HCT116 (cell line): ENCODE measurements at regions of chr1 and their contacts with region 1.

Region 1: DNA sequence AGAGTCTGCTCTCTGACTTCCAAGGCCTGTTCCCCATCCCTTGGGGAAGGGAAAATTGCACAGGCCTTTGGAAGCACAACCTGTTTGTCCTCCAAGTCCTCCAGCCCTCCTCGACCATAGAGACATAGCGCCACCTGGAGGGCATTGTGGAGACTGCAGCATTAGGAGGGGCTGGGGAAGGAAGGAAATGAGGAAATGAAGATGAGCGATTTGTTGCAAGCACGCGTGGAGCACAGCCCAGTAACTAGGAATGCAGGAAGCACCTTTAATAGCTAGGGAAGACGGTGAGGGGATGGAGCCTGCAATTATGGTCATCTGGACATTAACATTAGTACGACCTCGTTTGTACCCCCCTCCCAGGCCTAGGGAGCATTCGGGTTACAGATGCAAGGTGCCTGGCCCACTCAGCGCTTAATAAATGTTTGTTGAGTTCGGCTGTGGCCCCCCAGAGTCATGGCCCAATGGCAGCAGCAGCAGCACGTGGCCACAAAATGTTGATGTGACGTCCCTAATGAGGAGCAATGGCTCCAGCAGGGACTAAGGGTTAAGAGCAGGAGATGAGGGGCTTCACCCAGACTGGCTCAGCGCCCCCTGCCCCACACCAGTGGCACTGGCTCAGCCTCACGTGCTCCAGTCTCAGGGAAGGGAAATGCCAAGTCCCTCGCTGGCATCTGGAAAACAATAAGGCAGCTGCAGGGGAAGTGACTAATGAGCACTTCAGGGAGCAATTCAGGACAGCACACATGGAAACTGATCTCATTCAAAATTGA is 8.0 kb upstream of the CAMK2N1 start:
- DNase-seq: peak; percentile 84
- ATAC-seq: peak; percentile 48
- H3K4me3 ChIP-seq: peak overlapping the region in 1 of 2 experiments; percentile 37; a peak in 1 of 4 replicates
- H3K27ac ChIP-seq: peak overlapping the region; percentile 94
- H3K4me1 ChIP-seq: peaks cover 30 to 57% of the 10 kb centered on the region in 2 experiments
- H3K27me3 ChIP-seq: no peaks in the 10 kb centered on the region
- CTCF ChIP-seq: peak in 2 of 3 experiments; percentile 98 to 99; a peak in 4 of 6 replicates
- POLR2A ChIP-seq: no peak
- RAD21 ChIP-seq: no peak

Region 2: DNA sequence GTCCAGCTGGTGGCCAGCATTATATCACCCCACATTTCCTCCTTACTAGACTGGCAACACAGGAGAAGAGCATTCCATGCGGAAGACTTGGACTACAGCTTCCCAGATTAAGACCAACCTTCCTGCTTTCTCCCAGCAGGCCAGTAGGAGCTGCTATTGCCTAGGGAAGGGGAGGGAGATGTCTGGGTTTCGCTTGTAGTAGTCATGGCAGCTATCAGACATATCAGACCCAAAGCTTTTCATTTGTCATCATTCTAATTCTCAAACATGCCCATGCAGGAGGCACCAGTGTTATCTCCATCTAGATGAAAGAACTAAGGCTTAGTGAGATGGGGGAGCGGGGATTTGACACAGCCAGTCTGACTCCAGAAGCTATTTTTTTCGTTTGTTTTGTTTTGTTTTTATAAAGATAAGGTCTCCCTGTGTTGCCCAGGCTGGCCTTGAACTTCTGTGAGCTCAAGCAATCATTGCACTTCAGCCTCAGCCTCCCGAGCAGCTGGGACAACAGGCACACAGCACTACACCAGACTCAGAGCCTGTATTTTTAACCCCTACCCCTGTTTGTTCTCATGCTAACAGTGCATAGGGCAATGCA is 519.1 kb before region 1 on chr1:
- CTCF ChIA-PET with region 1: no interaction called
- POLR2A ChIA-PET with region 1: no interaction called
- RAD21 ChIA-PET with region 1: no interaction called
- intact Hi-C with region 1: loop called (anchors 2 kb)
- DNase-seq: peak; percentile 60
- ATAC-seq: peak; percentile 98
- H3K4me3 ChIP-seq: no peak overlapping the region
- H3K27ac ChIP-seq: no peak overlapping the region
- H3K4me1 ChIP-seq: 0 out of 4 replicates have a peak, but pooled peaks cover 0 to 3% of the 10 kb centered on the region in 2 experiments
- H3K27me3 ChIP-seq: 0 out of 2 replicates have a peak, but pooled peaks cover 4% of the 10 kb centered on the region
- CTCF ChIP-seq: peak; percentile 70 to 97 (median 87); a peak in 5 of 6 replicates
- POLR2A ChIP-seq: no peak
- RAD21 ChIP-seq: peak; percentile 94

Region 3: DNA sequence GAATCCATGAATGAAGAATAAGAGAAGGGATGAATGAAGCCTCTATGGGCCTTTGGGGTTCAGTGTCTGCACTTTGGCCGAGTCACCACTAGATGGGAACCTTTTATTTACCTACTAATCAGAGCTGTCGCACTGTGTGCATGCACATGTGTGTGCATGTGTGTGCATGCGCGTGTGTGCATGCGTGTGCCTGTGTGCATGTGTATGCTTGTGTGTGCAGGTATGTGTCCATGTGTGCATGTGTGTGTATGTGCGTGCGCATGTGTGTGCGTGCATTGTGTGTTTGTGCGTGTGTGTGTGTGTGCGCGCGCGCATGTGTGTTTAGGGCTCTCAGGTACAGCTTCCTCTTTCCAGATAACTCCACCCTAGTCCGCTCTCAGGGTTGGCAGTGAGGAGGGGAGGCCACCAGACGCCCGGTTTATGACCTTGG is 328.5 kb before region 1 on chr1:
- CTCF ChIA-PET with region 1: no interaction called
- POLR2A ChIA-PET with region 1: no interaction called
- RAD21 ChIA-PET with region 1: no interaction called
- intact Hi-C with region 1: loop called (anchors 5 kb)
- DNase-seq: peak; percentile 16
- ATAC-seq: peak; percentile 83
- H3K4me3 ChIP-seq: no peak overlapping the region
- H3K27ac ChIP-seq: no peak overlapping the region
- H3K4me1 ChIP-seq: no peaks in the 10 kb centered on the region
- H3K27me3 ChIP-seq: no peaks in the 10 kb centered on the region
- CTCF ChIP-seq: peak; percentile 47 to 62 (median 55); a peak in 5 of 6 replicates
- POLR2A ChIP-seq: no peak
- RAD21 ChIP-seq: peak; percentile 68

Region 4: GRCh38 chr1:20361806-20362640 is 132.0 kb before region 1 on chr1:
- CTCF ChIA-PET with region 1: interaction called, 35 read pairs
- POLR2A ChIA-PET with region 1: no interaction called
- RAD21 ChIA-PET with region 1: no interaction called
- intact Hi-C with region 1: loop called (anchors 1 kb)
- DNase-seq: peak; percentile 42
- ATAC-seq: peak; percentile 84
- H3K4me3 ChIP-seq: no peak overlapping the region
- H3K27ac ChIP-seq: no peak overlapping the region
- H3K4me1 ChIP-seq: peaks cover 13 to 19% of the 10 kb centered on the region in 2 experiments; a peak in 3 of 4 replicates
- H3K27me3 ChIP-seq: no peaks in the 10 kb centered on the region
- CTCF ChIP-seq: peak; percentile 84 to 96 (median 96)
- POLR2A ChIP-seq: no peak
- RAD21 ChIP-seq: peak; percentile 93

Region 5: DNA sequence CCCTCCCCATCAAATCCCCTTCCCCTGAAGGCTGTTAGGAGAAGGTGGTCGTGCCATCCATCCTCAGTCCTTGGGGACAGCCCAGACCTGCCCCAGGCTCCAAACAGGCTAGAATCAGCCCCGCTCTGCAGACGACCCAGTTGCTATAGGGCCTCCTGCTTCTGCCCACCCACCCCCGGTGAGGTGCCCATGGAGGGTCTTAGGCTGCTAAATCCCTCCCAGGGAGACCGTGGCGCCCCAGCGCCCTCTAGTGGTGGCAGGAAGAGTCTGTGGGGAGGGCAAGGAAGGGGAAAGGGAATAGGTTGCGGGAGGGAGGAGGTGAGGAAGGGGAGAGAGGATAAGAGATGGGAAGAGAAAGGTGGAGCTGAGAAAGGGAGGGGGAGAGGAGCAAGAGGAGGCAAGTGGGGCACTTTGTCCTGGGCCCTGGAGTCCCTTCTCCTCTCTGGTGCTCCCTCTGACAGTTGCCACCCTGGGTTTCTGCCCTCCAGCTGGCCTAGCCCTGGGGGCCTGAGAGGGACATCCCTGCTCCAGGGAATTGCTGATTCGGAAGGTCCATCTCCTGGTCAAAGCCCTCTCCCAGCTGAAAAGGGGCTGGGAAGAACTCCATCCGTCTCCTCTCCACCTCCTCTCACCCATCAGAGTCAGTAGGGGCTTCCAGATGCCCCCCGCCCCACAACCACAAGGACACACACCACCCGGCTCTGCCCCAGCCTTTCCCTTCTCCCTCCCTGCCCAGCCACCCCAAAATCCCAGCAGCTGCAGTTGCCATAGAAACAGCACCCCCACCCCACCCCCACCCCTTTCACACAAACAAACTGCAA is 63.5 kb before region 1 on chr1:
- CTCF ChIA-PET with region 1: interaction called, 29 read pairs
- POLR2A ChIA-PET with region 1: no interaction called
- RAD21 ChIA-PET with region 1: interaction called, 3 to 16 read pairs
- intact Hi-C with region 1: loop called (anchors 1 kb)
- DNase-seq: no peak
- ATAC-seq: peak; percentile 87
- H3K4me3 ChIP-seq: no peak overlapping the region
- H3K27ac ChIP-seq: no peak overlapping the region
- H3K4me1 ChIP-seq: peaks cover 3 to 22% of the 10 kb centered on the region in 2 experiments; a peak in 2 of 4 replicates
- H3K27me3 ChIP-seq: no peaks in the 10 kb centered on the region
- CTCF ChIP-seq: peak; percentile 95 to 98 (median 95)
- POLR2A ChIP-seq: no peak
- RAD21 ChIP-seq: peak; percentile 94

Region 6: GRCh38 chr1:20540281-20540680 is 46.3 kb after region 1 on chr1:
- CTCF ChIA-PET with region 1: no interaction called
- POLR2A ChIA-PET with region 1: no interaction called
- RAD21 ChIA-PET with region 1: no interaction called
- intact Hi-C with region 1: no loop called
- DNase-seq: no peak
- ATAC-seq: no peak
- H3K4me3 ChIP-seq: no peak overlapping the region
- H3K27ac ChIP-seq: no peak overlapping the region
- H3K4me1 ChIP-seq: no peaks in the 10 kb centered on the region
- H3K27me3 ChIP-seq: no peaks in the 10 kb centered on the region
- CTCF ChIP-seq: no peak
- POLR2A ChIP-seq: no peak
- RAD21 ChIP-seq: no peak